GM10248 (cell line): ENCODE measurements at regions of chr14 and their contacts with region 1.

Region 1: GRCh38 chr14:106277503-106277902 is 751.1 kb downstream of the TMEM121 start:
- DNase-seq: peak; percentile 24
- CTCF ChIP-seq: peak; percentile 59

Region 2: DNA sequence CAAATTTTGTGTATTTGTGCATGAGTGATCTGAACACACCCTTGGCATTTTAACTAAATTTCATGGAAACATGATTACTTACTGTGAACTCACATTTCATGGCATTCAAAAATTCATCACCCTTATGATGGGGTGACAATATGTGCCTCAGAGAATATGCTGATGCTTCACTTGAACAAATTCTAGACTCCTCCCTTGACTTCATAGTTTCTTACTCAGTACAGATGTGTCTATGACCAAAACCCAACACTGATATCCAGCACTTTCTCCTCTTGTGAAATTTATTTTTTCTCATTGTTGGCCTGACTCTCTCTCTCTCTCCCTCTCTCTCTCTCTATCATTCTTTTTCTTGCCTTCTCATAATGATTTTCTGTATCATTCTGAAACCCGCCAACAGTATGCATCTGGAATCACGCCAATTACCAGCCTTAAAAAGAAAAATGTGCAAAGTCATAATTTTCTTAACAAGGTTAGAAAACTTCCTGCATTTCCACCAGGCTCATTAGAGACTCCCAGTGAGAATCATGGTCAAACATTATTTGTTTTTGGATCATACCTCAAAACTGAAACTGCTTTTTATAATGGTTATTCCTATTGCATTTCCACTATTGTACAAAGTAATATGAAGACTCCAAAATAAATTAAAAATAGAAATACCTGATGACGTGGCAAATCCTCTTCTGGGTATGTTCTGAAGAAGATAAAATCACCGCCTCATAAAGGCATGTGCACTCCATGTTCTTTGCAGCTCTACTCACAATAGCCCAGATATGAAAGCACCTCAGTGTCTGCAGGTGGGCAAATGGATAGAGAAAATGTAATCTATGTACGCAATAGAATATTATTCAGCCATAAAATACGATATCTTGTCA is 28.9 kb before region 1 on chr14:
- CTCF ChIA-PET with region 1: no interaction called
- POLR2A ChIA-PET with region 1: no interaction called
- DNase-seq: no peak
- CTCF ChIP-seq: no peak

Region 3: GRCh38 chr14:106294324-106294723 is 16.8 kb after region 1 on chr14:
- CTCF ChIA-PET with region 1: interaction called, 11 read pairs
- POLR2A ChIA-PET with region 1: no interaction called
- DNase-seq: no peak
- CTCF ChIP-seq: no peak